Panc1 (cell line): ENCODE measurements at regions of chr16 and their contacts with region 1.

Region 1: GRCh38 chr16:4606354-4606753 is 8.3 kb downstream of the UBALD1 start:
- DNase-seq: no peak
- ATAC-seq: no peak
- H3K4me3 ChIP-seq: no peak overlapping the region
- H3K27ac ChIP-seq: no peak overlapping the region
- H3K4me1 ChIP-seq: peaks cover 2% of the 10 kb centered on the region
- H3K27me3 ChIP-seq: no peaks in the 10 kb centered on the region
- CTCF ChIP-seq: no peak

Region 2: DNA sequence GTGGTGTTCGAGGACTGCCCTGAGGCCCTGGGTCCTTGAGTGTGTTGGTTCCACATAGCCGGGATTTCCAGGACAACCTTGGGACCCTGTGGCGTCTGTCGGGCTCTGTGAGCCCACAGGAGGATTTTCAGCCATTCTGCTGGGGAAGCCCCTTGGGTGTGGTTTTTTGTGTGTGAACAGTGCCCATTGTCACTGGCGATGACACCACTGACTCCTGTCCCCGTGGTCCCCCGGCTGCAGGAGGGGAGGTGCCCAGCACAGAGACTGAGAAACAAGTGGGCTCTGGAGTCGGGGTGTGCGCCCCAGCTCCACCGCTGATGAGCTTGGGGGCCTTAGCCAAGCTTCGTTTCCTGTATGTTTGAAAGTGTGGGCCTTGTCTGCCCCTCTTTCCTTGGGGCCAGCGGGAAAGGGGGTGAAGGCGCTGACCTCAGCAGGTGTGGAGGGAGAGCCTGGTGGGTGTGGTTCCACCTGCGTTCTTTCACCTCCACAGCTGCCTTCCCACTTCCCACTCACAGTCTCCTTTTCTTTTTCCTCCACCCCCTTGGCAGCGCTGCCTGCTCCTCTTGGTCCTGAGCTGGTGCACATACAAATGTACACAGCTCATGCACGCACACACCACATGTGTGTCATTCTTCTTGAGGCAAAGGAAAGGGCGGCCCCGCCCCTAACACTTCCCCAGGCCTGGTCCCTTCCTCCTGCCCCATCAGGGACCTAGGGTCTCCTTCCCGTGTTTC is 34.4 kb after region 1 on chr16:
- CTCF ChIA-PET with region 1: no interaction called
- POLR2A ChIA-PET with region 1: interaction called, 10 read pairs
- in situ Hi-C with region 1: no loop called
- intact Hi-C with region 1: no loop called
- DNase-seq: no peak
- ATAC-seq: peak; percentile 27; the same call in 1 of the 2 replicates
- H3K4me3 ChIP-seq: no peak overlapping the region
- H3K27ac ChIP-seq: no peak overlapping the region
- H3K4me1 ChIP-seq: no peaks in the 10 kb centered on the region
- H3K27me3 ChIP-seq: no peaks in the 10 kb centered on the region
- CTCF ChIP-seq: no peak